SK-N-SH (cell line): ENCODE measurements at regions of chr17 and their contacts with region 1.

Region 1: DNA sequence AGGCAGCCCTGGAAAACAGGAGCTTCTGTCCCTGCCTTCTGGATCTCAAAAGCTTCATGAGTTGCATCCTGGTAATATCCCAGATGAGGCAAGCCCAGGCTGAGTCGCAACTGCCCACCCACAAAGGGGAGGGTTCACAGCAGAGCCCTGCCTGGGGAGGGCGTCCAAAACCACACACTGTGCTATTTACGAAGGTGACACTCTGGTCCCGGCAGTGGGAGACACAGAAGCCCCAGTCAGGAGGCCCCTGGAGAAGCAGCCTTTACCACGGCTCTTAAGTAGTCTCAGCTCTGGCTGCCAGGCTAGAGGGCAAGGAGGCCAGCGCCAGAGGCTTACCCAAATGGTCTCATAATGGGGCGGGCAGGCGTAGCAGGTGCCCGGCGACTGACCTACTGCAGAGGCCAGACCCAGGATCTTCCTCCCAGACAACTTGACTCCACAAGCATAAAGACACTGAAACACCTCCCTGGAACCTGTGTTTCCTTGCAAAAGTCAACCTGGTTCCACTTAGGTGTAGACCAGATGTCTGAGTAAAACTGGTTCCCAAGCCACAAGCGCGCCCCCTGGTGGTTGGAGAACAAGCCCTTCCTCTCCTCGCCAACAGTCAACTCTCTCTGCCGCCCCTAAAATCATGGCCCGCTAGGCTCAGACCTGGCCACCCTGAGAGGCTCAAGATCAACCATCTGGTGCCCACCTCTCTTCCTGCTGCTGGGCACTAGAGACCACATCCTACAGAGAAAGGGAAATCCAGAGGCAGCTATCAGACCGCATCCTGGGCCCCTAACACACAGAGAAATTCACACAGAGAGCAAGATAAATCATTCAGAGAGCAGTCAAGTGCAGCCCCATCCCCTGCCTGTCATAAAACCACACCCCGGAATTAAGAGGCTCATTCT is 5.2 kb downstream of the AXIN2 start:
- DNase-seq: peak; percentile 81
- H3K4me3 ChIP-seq: peak overlapping the region in 1 of 2 experiments; percentile 24; a peak in 1 of 4 replicates
- H3K27ac ChIP-seq: no peak overlapping the region
- H3K4me1 ChIP-seq: peaks cover 13 to 24% of the 10 kb centered on the region in 2 experiments; a peak in 3 of 4 replicates
- H3K27me3 ChIP-seq: no peaks in the 10 kb centered on the region
- CTCF ChIP-seq: peak; percentile 95
- EP300 ChIP-seq: no peak
- RAD21 ChIP-seq: peak; percentile 74

Region 2: GRCh38 chr17:65278050-65278819 is 278.0 kb before region 1 on chr17:
- CTCF ChIA-PET with region 1: interaction called, 12 read pairs
- POLR2A ChIA-PET with region 1: no interaction called
- DNase-seq: peak; percentile 89
- H3K4me3 ChIP-seq: no peak overlapping the region
- H3K27ac ChIP-seq: no peak overlapping the region
- H3K4me1 ChIP-seq: no peaks in the 10 kb centered on the region; a peak in 1 of 4 replicates
- H3K27me3 ChIP-seq: no peaks in the 10 kb centered on the region
- CTCF ChIP-seq: peak; percentile 87
- EP300 ChIP-seq: no peak
- RAD21 ChIP-seq: peak; percentile 91

Region 3: DNA sequence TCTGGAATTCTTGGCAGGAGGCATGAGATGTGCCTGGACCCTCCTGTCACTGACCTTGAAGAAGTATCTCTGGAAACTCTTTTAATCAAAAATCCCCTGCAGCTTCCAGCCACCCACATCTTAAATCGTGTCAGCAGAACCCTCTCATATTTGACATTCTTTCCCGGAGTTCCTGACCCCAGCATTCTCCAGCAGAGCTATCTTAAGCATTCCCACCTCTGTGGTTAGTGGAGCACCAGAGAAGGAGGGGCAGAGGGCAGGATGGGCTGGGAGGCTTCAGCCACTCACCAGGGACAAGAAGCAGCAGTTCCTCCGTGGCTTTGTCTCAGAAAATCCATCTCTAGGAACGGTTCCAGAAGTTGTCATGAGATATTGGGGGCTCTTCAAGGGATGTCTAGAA is 269.2 kb before region 1 on chr17:
- CTCF ChIA-PET with region 1: interaction called, 10 read pairs
- POLR2A ChIA-PET with region 1: no interaction called
- DNase-seq: no peak
- H3K4me3 ChIP-seq: no peak overlapping the region
- H3K27ac ChIP-seq: peak overlapping the region in 1 of 2 experiments; percentile 23; a peak in 1 of 4 replicates
- H3K4me1 ChIP-seq: peaks cover 0 to 9% of the 10 kb centered on the region in 2 experiments; a peak in 2 of 4 replicates
- H3K27me3 ChIP-seq: no peaks in the 10 kb centered on the region
- CTCF ChIP-seq: no peak
- EP300 ChIP-seq: peak in 1 of 2 experiments; percentile 46; a peak in 2 of 4 replicates
- RAD21 ChIP-seq: no peak

Region 4: GRCh38 chr17:65434251-65434650 is 122.0 kb before region 1 on chr17:
- CTCF ChIA-PET with region 1: no interaction called
- POLR2A ChIA-PET with region 1: no interaction called
- DNase-seq: no peak
- H3K4me3 ChIP-seq: no peak overlapping the region
- H3K27ac ChIP-seq: no peak overlapping the region
- H3K4me1 ChIP-seq: peaks cover 0 to 6% of the 10 kb centered on the region in 2 experiments; a peak in 1 of 4 replicates
- H3K27me3 ChIP-seq: no peaks in the 10 kb centered on the region
- CTCF ChIP-seq: no peak
- EP300 ChIP-seq: no peak
- RAD21 ChIP-seq: no peak

Region 5: GRCh38 chr17:65485376-65486299 is 70.6 kb before region 1 on chr17:
- CTCF ChIA-PET with region 1: no interaction called
- POLR2A ChIA-PET with region 1: no interaction called
- DNase-seq: no peak
- H3K4me3 ChIP-seq: no peak overlapping the region
- H3K27ac ChIP-seq: no peak overlapping the region
- H3K4me1 ChIP-seq: no peaks in the 10 kb centered on the region
- H3K27me3 ChIP-seq: no peaks in the 10 kb centered on the region; the same call in 1 of the 2 replicates
- CTCF ChIP-seq: no peak
- EP300 ChIP-seq: no peak
- RAD21 ChIP-seq: no peak

Region 6: GRCh38 chr17:65514082-65514481 is 42.2 kb before region 1 on chr17:
- CTCF ChIA-PET with region 1: no interaction called
- POLR2A ChIA-PET with region 1: no interaction called
- DNase-seq: no peak
- H3K4me3 ChIP-seq: no peak overlapping the region
- H3K27ac ChIP-seq: no peak overlapping the region
- H3K4me1 ChIP-seq: no peaks in the 10 kb centered on the region
- H3K27me3 ChIP-seq: no peaks in the 10 kb centered on the region
- CTCF ChIP-seq: no peak
- EP300 ChIP-seq: no peak
- RAD21 ChIP-seq: no peak

Region 7: GRCh38 chr17:65531263-65532100 is 24.8 kb before region 1 on chr17:
- CTCF ChIA-PET with region 1: interaction called, 13 read pairs
- POLR2A ChIA-PET with region 1: interaction called, 3 read pairs
- DNase-seq: no peak
- H3K4me3 ChIP-seq: no peak overlapping the region
- H3K27ac ChIP-seq: peak overlapping the region in 1 of 2 experiments; percentile 91; a peak in 2 of 4 replicates
- H3K4me1 ChIP-seq: peaks cover 0 to 34% of the 10 kb centered on the region in 2 experiments; a peak in 2 of 4 replicates
- H3K27me3 ChIP-seq: no peaks in the 10 kb centered on the region
- CTCF ChIP-seq: peak; percentile 24
- EP300 ChIP-seq: no peak
- RAD21 ChIP-seq: no peak

Region 8: GRCh38 chr17:65537845-65538674 is 18.2 kb before region 1 on chr17:
- CTCF ChIA-PET with region 1: interaction called, 73 read pairs
- POLR2A ChIA-PET with region 1: no interaction called
- DNase-seq: no peak
- H3K4me3 ChIP-seq: no peak overlapping the region
- H3K27ac ChIP-seq: no peak overlapping the region
- H3K4me1 ChIP-seq: no peaks in the 10 kb centered on the region; a peak in 1 of 4 replicates
- H3K27me3 ChIP-seq: no peaks in the 10 kb centered on the region
- CTCF ChIP-seq: no peak
- EP300 ChIP-seq: no peak
- RAD21 ChIP-seq: no peak